Psoas muscle (tissue), 8 donors: ENCODE measurements at regions of chr1 and their contacts with region 1.

Region 1: GRCh38 chr1:245045087-245045881 is 109.5 kb upstream of the KIF26B start:
- DNase-seq: no peak
- ATAC-seq: peak in 3 of 4 donors; percentile 66 to 73 (median 67)
- H3K4me3 ChIP-seq: no peak overlapping the region
- H3K27ac ChIP-seq: no peak overlapping the region
- H3K4me1 ChIP-seq: peaks cover 3% of the 10 kb centered on the region
- H3K27me3 ChIP-seq: no peaks in the 10 kb centered on the region
- CTCF ChIP-seq: no peak

Region 2: DNA sequence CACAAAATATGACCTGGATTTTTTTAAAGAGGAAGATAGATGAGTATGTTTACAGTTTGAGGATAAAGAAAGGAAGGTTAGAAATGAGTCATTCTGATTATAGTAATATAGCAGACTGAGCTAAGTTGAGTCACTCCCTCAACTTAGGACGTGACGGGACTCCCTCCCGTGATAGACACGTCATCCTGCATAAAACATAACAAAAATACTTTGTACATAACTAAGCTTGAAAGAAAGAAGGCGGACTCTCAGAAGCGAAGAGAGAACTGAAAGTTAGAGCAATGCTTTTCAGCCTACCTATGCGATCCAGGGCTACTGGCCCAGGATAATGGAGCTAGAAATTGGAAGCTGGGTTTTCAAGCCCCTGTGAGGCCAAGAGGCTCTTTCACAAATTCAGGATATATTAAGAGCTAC is 445.3 kb before region 1 on chr1:
- intact Hi-C with region 1: loop called (anchors 5 to 10 kb)
- DNase-seq: no peak
- ATAC-seq: peak; percentile 75 to 83 (median 80)
- H3K4me3 ChIP-seq: no peak overlapping the region
- H3K27ac ChIP-seq: peak overlapping the region; percentile 56
- H3K4me1 ChIP-seq: no peaks in the 10 kb centered on the region
- H3K27me3 ChIP-seq: no peaks in the 10 kb centered on the region
- CTCF ChIP-seq: no peak

Region 3: GRCh38 chr1:244605835-244606370 is 439.4 kb before region 1 on chr1:
- intact Hi-C with region 1: loop called (anchors 5 to 10 kb)
- DNase-seq: no peak
- ATAC-seq: no peak
- H3K4me3 ChIP-seq: no peak overlapping the region
- H3K27ac ChIP-seq: no peak overlapping the region
- H3K4me1 ChIP-seq: no peaks in the 10 kb centered on the region
- H3K27me3 ChIP-seq: no peaks in the 10 kb centered on the region
- CTCF ChIP-seq: no peak

Region 4: DNA sequence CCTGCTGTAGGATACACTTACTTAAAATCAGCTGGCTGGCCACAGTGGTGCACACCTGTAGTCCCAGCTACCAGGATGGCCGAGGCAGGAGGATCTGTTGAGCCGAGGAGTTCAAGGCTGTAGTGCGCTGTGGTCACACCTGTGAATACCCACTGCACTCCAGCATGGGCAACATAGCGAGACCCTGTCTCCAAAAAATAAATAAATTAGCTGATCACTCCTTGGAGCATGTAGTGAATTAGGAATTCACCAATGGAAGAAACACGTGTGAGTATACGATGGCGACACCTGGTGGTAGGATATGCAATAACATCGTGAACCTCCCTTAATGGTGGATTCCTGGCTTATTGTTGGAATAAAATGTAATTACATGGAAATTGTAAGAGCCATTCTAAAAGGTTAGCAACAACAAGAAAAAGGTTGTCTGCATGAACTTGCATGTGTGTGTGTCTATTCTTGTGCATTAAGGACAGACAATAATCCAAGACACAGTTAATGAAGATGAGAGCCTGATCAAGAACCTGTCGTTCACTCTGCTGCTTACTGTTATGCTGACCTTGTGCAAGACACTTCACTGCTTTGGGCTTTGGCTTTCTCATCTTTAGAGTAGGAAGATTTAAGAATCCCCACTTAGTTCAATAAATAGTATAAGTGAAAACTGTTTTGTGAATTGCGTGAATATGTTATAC is 248.4 kb before region 1 on chr1:
- intact Hi-C with region 1: loop called (anchors 2 to 5 kb)
- DNase-seq: no peak
- ATAC-seq: peak; percentile 63 to 81 (median 69)
- H3K4me3 ChIP-seq: no peak overlapping the region
- H3K27ac ChIP-seq: no peak overlapping the region
- H3K4me1 ChIP-seq: no peaks in the 10 kb centered on the region
- H3K27me3 ChIP-seq: no peaks in the 10 kb centered on the region
- CTCF ChIP-seq: peak; percentile 94

Region 5: GRCh38 chr1:244864253-244865027 is 180.8 kb before region 1 on chr1 and contains the start of gene HNRNPU:
- intact Hi-C with region 1: loop called in 1 of 2 experiments (anchors 2 kb)
- DNase-seq: peak; percentile 98
- ATAC-seq: peak; percentile 83 to 89 (median 88)
- H3K4me3 ChIP-seq: peak within 1 kb of the TSS; percentile 97
- H3K27ac ChIP-seq: peak within 1 kb of the TSS; percentile 100
- H3K4me1 ChIP-seq: peaks cover 40% of the 10 kb centered on the region
- H3K27me3 ChIP-seq: no peaks in the 10 kb centered on the region
- CTCF ChIP-seq: peak; percentile 19
- total RNA-seq, gene HNRNPU: 163 to 262 (median 202) TPM

Region 6: DNA sequence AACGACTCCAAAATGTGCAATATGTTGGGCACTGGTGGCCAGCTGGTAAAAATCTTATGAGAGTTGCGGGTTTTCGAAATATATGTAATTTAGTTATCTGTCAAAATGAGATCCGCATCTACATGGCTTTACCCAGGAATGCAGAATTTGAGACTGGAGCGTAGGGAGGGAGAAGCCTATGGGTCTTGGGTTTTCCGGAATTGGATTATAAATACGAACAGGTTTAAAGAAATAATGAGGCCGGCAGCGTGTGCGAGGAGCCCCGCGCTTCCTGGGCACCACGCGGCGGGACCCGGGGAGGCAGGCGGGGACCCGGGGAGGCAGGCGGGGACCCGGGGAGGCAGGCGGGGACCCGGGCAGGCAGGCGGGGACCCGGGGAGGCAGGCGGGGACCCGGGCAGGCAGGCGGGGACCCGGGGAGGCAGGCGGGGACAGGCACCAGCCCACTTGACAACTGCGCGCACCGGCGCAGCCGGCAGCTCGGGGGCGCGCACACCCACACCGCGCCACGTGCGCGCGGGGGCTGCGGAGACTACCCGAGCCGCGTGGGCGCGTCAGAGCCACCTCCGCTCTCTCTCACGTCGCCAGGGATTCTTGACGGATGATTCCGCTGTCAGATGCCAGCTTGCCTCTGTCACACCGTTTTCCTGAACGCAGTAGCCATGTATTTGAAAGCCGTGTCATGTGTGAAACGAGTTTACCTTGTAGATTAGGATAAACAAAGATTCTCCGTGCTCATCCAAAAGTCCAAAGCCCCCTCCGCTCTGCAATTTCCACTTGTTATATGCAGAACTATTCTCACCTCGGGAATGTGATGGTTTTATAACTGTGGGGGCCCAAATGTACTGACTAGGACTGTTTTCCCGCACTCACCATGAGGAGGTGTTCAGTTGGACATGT is 126.6 kb before region 1 on chr1:
- intact Hi-C with region 1: loop called in 1 of 2 experiments (anchors 5 kb)
- DNase-seq: peak; percentile 70 to 86
- ATAC-seq: peak; percentile 84 to 93 (median 88)
- H3K4me3 ChIP-seq: peak overlapping the region; percentile 67
- H3K27ac ChIP-seq: peak overlapping the region; percentile 91
- H3K4me1 ChIP-seq: peaks cover 23% of the 10 kb centered on the region
- H3K27me3 ChIP-seq: no peaks in the 10 kb centered on the region
- CTCF ChIP-seq: peak; percentile 21

Region 7: GRCh38 chr1:244970661-244971551 is 74.4 kb before region 1 on chr1:
- intact Hi-C with region 1: loop called (anchors 5 kb)
- DNase-seq: peak; percentile 94 to 97
- ATAC-seq: peak; percentile 84 to 88 (median 86)
- H3K4me3 ChIP-seq: peak overlapping the region; percentile 73
- H3K27ac ChIP-seq: peak overlapping the region; percentile 98
- H3K4me1 ChIP-seq: peaks cover 23% of the 10 kb centered on the region
- H3K27me3 ChIP-seq: no peaks in the 10 kb centered on the region
- CTCF ChIP-seq: peak; percentile 45

Region 8: GRCh38 chr1:245107776-245108645 is 62.7 kb after region 1 on chr1:
- intact Hi-C with region 1: no loop called
- DNase-seq: no peak
- ATAC-seq: no peak
- H3K4me3 ChIP-seq: no peak overlapping the region
- H3K27ac ChIP-seq: no peak overlapping the region
- H3K4me1 ChIP-seq: no peaks in the 10 kb centered on the region
- H3K27me3 ChIP-seq: no peaks in the 10 kb centered on the region
- CTCF ChIP-seq: no peak

Region 9: GRCh38 chr1:245156081-245156735 is 110.9 kb after region 1 on chr1:
- intact Hi-C with region 1: no loop called
- DNase-seq: peak; percentile 77 to 88
- ATAC-seq: peak; percentile 87 to 92 (median 90)
- H3K4me3 ChIP-seq: peak overlapping the region; percentile 64
- H3K27ac ChIP-seq: no peak overlapping the region
- H3K4me1 ChIP-seq: peaks cover 29% of the 10 kb centered on the region
- H3K27me3 ChIP-seq: peaks cover 0 to 86% (median 20%) of the 10 kb centered on the region in 3 donors
- CTCF ChIP-seq: peak; percentile 71